Stomach (tissue), 19 donors: ENCODE measurements at regions of chr2 and their contacts with region 1.

Region 1: GRCh38 chr2:98649135-98649991 is 41.0 kb downstream of the UNC50 start:
- DNase-seq: peak; percentile 89 to 93
- H3K4me3 ChIP-seq: no peak overlapping the region
- H3K27ac ChIP-seq: no peak overlapping the region
- H3K4me1 ChIP-seq: peaks cover 0 to 9% (median 2%) of the 10 kb centered on the region in 4 donors
- H3K27me3 ChIP-seq: no peaks in the 10 kb centered on the region
- CTCF ChIP-seq: peak in 6 of 7 experiments; percentile 81 to 99 (median 98)
- EP300 ChIP-seq: no peak
- POLR2A ChIP-seq: no peak

Region 2: DNA sequence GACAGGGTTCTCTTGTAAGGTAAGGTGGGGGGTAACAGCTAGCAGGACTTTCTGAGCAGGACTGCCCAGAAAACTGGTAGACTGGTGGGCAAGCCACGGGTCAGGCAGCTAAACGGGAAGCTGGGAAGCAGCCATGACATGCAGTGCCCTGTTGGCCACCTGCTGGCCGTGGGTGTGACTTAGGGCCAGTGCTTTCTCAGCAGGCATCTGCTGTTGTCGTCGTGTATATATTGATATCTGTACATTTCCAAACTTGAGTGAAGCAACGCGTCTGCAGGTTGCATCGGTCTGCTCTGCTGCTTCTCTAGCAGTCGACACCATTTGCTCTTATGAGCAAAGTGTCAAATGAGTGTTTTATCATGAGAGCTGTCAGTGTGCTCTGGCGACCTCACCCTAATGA is 72.0 kb before region 1 on chr2:
- intact Hi-C with region 1: no loop called
- DNase-seq: no peak
- H3K4me3 ChIP-seq: no peak overlapping the region
- H3K27ac ChIP-seq: no peak overlapping the region
- H3K4me1 ChIP-seq: no peaks in the 10 kb centered on the region
- H3K27me3 ChIP-seq: no peaks in the 10 kb centered on the region
- CTCF ChIP-seq: no peak
- EP300 ChIP-seq: no peak
- POLR2A ChIP-seq: no peak

Region 3: GRCh38 chr2:98835831-98836385 is 186.5 kb after region 1 on chr2:
- intact Hi-C with region 1: loop called (anchors 5 kb)
- DNase-seq: no peak
- H3K4me3 ChIP-seq: no peak overlapping the region
- H3K27ac ChIP-seq: peak overlapping the region in 2 of 5 donors; percentile 24 to 37
- H3K4me1 ChIP-seq: peaks cover 0 to 12% (median 7%) of the 10 kb centered on the region in 4 donors
- H3K27me3 ChIP-seq: no peaks in the 10 kb centered on the region
- CTCF ChIP-seq: no peak
- EP300 ChIP-seq: no peak
- POLR2A ChIP-seq: no peak